T-cell (primary cell): ENCODE measurements at regions of chr12 and their contacts with region 1.

Region 1: GRCh38 chr12:132904718-132905328 is 17.4 kb upstream of the CHFR start:
- DNase-seq: peak; percentile 74 to 94 (median 86)
- ATAC-seq: peak; percentile 17 to 52 (median 30)
- H3K4me3 ChIP-seq: no peak overlapping the region
- H3K4me3 Mint-ChIP-seq: peak overlapping the region; percentile 46 to 49 (median 47)
- H3K27ac ChIP-seq: no peak overlapping the region
- H3K27ac Mint-ChIP-seq: peak overlapping the region; percentile 59 to 86
- H3K4me1 ChIP-seq: peaks cover 13 to 31% of the 10 kb centered on the region in 2 experiments
- H3K4me1 Mint-ChIP-seq: peaks cover 14 to 22% (median 16%) of the 10 kb centered on the region in 3 donors
- H3K27me3 ChIP-seq: peaks cover 0 to 9% of the 10 kb centered on the region in 2 experiments
- H3K27me3 Mint-ChIP-seq: no peaks in the 10 kb centered on the region

Region 2: DNA sequence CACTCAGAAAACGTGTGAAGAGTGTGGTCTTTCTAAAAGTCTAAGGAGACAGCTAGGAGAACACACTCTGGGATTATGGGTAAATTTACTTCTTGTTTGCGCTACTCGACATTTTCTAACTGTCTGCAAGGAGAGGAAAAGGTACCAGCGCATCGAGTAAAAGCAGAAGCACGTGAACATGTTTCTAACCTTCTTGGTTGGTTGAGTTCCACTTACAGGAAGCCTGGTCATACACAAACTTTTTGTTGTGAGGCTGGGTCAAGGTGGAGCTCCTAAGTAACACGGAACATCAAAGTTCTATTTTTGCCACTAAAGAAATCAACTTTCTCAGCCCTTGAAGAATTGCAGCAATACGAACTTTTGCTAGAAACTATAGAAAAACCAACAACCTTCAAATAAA is 163.2 kb before region 1 on chr12:
- CTCF ChIA-PET with region 1: interaction called in 1 of 2 experiments, 8 read pairs
- POLR2A ChIA-PET with region 1: interaction called in 1 of 2 experiments, 12 read pairs
- DNase-seq: no peak
- ATAC-seq: no peak
- H3K4me3 ChIP-seq: no peak overlapping the region
- H3K4me3 Mint-ChIP-seq: no peak overlapping the region
- H3K27ac ChIP-seq: no peak overlapping the region
- H3K27ac Mint-ChIP-seq: peak overlapping the region in 1 of 2 donors; percentile 49
- H3K4me1 ChIP-seq: no peaks in the 10 kb centered on the region
- H3K4me1 Mint-ChIP-seq: peaks cover 9 to 12% (median 12%) of the 10 kb centered on the region in 3 donors
- H3K27me3 ChIP-seq: no peaks in the 10 kb centered on the region
- H3K27me3 Mint-ChIP-seq: no peaks in the 10 kb centered on the region